Posterior cingulate gyrus (tissue), 11 donors: ENCODE measurements at regions of chr2 and their contacts with region 1.

Region 1: DNA sequence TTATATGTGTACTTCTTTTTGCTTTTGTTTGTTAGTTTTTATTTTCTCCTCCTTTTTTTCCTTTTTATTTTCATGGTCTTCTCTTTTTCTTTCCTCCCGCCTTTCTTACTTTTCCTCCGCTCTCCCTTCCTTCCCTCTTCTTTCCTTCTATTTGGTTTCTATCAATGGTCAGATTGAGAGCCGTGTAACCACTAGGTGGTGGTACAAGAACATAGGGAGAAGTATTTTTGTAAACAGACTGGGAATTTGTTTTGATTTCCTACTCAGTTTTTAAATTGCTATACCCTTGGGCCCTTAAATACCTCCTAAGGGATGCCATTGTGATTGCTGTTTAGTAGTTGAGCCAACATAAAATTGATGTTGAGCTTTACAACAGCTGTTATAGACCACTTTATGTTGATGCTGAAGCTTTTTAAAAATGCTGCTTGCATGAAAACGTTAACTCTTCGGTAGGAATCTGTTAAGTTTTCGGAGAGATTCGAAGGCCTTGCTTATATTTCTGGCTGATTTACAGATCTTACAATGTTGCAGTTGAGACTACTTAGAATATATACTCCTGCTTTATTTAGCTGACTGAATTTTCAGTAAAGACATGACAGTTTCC is 124.2 kb downstream of the UBE2E3 start:
- DNase-seq: no peak

Region 2: DNA sequence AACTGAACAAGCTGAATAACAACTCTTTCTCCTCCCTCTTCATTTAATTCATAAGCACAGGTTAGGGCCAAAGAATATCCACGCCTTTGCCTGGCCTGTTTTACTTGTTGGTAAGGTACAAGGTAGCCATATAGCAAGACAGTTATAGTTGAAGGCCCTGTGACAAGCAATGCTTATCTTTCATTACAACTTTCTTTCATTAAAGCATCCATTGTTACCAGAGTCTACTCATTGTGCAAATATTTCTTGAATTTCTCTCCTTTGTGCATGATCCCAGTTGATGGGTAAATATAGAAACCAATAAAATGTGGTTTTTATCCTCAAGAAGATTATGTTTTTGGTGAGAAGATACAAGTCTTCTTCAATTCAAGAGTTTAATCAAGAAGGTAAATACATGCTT is 16.0 kb after region 1 on chr2:
- intact Hi-C with region 1: no loop called
- DNase-seq: no peak

Region 3: DNA sequence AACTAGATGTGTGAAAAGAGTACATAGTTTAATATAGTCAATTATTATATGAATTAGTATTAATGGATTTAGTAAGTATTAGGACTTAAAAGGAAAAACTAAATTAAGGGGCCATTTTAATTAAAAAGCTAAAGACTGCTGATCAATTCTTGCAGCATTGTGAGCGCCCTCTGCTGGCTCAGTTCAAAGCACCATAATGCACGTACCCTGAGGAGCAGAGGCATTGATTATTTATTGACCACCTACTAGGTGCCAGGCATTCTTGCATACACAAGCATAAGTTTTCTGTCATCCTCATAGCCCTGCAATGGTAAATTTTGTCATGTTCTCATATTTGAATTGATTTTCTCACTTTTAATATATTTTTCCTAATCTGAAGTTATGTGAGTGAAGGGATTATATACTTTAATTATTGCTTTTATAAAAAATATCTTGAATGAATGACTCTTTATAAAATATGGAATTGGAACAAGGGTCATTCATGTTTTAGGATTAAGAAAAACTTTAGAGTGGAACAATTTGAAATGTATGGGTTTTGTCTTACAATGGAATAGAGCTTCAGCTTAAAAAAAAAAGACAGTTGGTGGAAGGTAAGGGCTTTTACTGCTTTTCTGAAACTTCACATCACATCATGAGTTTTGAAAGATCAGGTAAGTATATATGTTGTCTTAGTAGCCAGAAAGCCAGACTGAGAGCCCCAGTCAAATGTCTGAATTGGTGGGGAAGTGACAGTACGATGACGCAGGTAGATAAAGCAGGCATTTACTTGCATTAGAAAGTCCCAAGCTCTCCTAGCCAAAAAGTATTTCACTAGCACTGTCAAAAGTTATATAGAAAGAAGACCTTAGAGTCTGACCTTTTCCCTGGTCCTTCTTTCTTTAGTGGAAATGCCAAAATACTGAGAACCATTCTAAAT is 362.3 kb after region 1 on chr2:
- intact Hi-C with region 1: loop called (anchors 5 kb)
- DNase-seq: peak; percentile 20 to 86 (median 64)